ENCODE measurements at regions of chr10 and their contacts with region 1.

Region 1: GRCh38 chr10:106636766-106637491 is 527.6 kb downstream of the SORCS1 start:
- DNase-seq: no peak
- ATAC-seq: peak in 1 of 8 donors; percentile 35
- H3K4me3 ChIP-seq: no peak overlapping the region
- H3K27ac ChIP-seq: no peak overlapping the region
- H3K4me1 ChIP-seq: no peaks in the 10 kb centered on the region
- H3K27me3 ChIP-seq: no peaks in the 10 kb centered on the region
- CTCF ChIP-seq: no peak

Region 2: DNA sequence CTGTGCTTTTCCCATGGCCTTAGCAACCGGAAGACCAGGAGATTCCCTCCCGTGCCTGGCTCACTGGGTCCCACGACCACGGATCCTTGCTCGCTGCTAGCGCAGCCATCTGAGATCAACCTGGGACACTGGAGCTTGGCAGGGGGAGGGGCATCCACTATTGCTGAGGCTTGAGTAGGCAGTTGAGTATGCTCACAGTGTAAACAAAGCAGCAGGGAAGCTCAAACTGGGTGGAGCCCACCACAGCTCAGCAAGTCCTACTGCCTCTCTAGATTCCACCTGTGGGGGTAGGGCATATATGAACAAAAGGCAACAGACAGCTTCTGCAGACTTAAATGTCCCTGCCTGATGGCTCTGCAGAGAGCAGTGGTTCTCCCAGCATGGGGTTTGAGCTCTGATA is 169.4 kb before region 1 on chr10:
- intact Hi-C with region 1: no loop called
- DNase-seq: no peak
- ATAC-seq: no peak
- H3K4me3 ChIP-seq: no peak overlapping the region
- H3K27ac ChIP-seq: no peak overlapping the region
- H3K4me1 ChIP-seq: no peaks in the 10 kb centered on the region
- H3K27me3 ChIP-seq: no peaks in the 10 kb centered on the region
- CTCF ChIP-seq: no peak

Region 3: DNA sequence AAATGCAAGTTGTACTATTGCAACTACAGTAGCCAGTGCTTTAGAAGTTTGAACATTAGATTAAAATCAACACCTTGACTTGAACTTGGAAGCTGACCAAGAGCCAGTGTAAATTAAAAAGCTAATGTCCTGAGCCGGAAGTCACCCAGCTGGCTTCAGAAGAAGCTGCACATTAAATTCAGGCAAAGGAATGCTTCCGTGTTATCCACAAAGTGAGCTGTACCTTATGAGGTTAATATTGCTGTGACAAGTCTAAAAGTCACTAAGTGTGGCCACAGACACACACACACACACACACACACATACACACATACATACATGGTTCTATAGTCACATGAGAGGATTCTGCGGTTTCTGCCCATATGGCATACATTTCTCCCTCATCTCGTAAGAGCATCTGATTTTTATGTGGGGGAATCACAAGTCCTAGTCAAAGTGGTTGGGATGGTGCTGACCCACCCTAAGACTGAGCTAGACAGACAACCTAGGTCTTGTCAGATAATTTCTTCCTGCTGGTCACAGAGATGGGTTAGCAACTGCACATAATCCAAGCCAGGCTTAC is 85.3 kb before region 1 on chr10:
- intact Hi-C with region 1: no loop called
- DNase-seq: no peak
- ATAC-seq: no peak
- H3K4me3 ChIP-seq: no peak overlapping the region
- H3K27ac ChIP-seq: no peak overlapping the region
- H3K4me1 ChIP-seq: peaks cover 0 to 9% (median 0%) of the 10 kb centered on the region in 9 donors
- H3K27me3 ChIP-seq: no peaks in the 10 kb centered on the region
- CTCF ChIP-seq: no peak

Region 4: DNA sequence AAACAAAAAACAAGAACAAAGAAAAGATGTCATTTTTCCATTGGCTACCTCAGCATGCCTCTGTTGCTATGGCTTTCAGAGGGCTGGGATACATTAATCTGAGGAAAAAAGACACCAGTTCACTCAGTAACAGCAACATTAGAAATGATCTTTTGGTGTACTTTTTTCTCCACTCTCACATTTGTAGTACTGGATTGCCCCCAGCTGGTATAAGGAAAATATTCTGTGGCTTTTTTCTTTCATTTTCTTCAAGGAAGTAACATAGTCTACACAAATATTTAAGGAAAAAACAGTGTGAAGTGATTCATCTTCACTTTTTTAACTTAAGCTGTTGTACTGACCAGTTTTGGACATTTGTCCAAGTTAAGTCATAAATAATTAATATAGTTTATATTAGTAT is 45.2 kb after region 1 on chr10:
- intact Hi-C with region 1: loop called in 1 of 10 experiments (anchors 5 kb)
- DNase-seq: no peak
- ATAC-seq: no peak
- H3K4me3 ChIP-seq: no peak overlapping the region
- H3K27ac ChIP-seq: no peak overlapping the region
- H3K4me1 ChIP-seq: peaks cover 0 to 7% (median 0%) of the 10 kb centered on the region in 9 donors
- H3K27me3 ChIP-seq: no peaks in the 10 kb centered on the region
- CTCF ChIP-seq: peak in 6 of 9 donors; percentile 6 to 48 (median 40)